ENCODE measurements at regions of chr2 and their contacts with region 1.

Region 1: GRCh38 chr2:18903750-18904149 is 314.4 kb upstream of the NT5C1B start:
- DNase-seq: no peak
- H3K4me3 ChIP-seq: no peak overlapping the region
- H3K27ac ChIP-seq: no peak overlapping the region
- H3K4me1 ChIP-seq: peaks cover 9 to 23% of the 10 kb centered on the region in 2 donors
- H3K27me3 ChIP-seq: no peaks in the 10 kb centered on the region
- CTCF ChIP-seq: no peak

Region 2: GRCh38 chr2:18987592-18988073 is 83.9 kb after region 1 on chr2:
- intact Hi-C with region 1: loop called (anchors 5 kb)
- DNase-seq: peak in 1 of 2 donors; percentile 86
- H3K4me3 ChIP-seq: no peak overlapping the region
- H3K27ac ChIP-seq: no peak overlapping the region
- H3K4me1 ChIP-seq: peaks cover 0 to 20% of the 10 kb centered on the region in 2 donors
- H3K27me3 ChIP-seq: no peaks in the 10 kb centered on the region
- CTCF ChIP-seq: peak in 1 of 3 experiments; percentile 29

Measured in ascending aorta (tissue), 2 donors.